Dorsolateral prefrontal cortex (tissue), 120 donors: ENCODE measurements at regions of chr11 and their contacts with region 1.

Region 1: GRCh38 chr11:134417871-134418840 is 6.1 kb upstream of the B3GAT1 start:
- DNase-seq: peak in 1 of 10 donors; percentile 42
- H3K4me3 ChIP-seq: no peak overlapping the region
- H3K27ac ChIP-seq: peak overlapping the region in 7 of 59 donors; percentile 5 to 57 (median 23)
- H3K27me3 ChIP-seq: no peaks in the 10 kb centered on the region
- CTCF ChIP-seq: no peak

Region 2: DNA sequence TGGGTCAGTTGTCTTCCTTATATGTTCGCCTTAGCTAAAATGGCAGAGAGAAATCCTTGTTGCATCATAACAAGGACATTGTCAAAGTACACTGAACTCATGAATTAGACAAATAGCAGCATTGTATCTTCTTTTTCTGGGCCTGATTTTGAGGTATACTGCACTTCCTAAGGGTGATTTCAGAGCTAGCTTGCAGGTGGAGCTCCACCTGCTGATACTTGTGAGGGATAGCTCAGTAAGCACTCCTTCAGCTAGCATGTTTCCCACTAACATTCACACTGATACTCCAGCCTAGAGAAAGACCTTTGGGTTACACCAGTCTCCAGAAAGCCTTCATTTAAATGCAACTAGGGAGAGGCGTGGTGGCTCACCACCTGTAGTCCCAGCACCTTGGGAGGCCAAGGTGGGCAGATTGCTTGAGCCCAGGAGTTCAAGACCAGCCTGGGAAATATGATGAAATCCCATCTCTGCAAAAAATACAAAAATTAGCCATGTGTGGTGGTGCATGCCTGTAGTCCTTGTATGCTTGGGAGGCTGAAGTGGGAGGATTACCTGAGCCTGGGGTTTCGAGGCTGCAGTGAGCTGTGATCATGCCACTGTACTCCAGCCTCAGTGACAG is 319.5 kb before region 1 on chr11:
- intact Hi-C with region 1: no loop called
- DNase-seq: no peak
- H3K4me3 ChIP-seq: no peak overlapping the region
- H3K27ac ChIP-seq: peak overlapping the region in 36 of 59 donors; percentile 1 to 77 (median 44)
- H3K27me3 ChIP-seq: no peaks in the 10 kb centered on the region
- CTCF ChIP-seq: peak in 13 of 56 donors; percentile 8 to 20 (median 13)

Region 3: GRCh38 chr11:134469627-134470026 is 51.5 kb after region 1 on chr11:
- intact Hi-C with region 1: loop called in 1 of 2 experiments (anchors 5 kb)
- DNase-seq: peak in 1 of 10 donors; percentile 57
- H3K4me3 ChIP-seq: no peak overlapping the region
- H3K27ac ChIP-seq: no peak overlapping the region
- H3K27me3 ChIP-seq: no peaks in the 10 kb centered on the region
- CTCF ChIP-seq: no peak